Right cardiac atrium (tissue), 5 donors: ENCODE measurements at regions of chr6 and their contacts with region 1.

Region 1: DNA sequence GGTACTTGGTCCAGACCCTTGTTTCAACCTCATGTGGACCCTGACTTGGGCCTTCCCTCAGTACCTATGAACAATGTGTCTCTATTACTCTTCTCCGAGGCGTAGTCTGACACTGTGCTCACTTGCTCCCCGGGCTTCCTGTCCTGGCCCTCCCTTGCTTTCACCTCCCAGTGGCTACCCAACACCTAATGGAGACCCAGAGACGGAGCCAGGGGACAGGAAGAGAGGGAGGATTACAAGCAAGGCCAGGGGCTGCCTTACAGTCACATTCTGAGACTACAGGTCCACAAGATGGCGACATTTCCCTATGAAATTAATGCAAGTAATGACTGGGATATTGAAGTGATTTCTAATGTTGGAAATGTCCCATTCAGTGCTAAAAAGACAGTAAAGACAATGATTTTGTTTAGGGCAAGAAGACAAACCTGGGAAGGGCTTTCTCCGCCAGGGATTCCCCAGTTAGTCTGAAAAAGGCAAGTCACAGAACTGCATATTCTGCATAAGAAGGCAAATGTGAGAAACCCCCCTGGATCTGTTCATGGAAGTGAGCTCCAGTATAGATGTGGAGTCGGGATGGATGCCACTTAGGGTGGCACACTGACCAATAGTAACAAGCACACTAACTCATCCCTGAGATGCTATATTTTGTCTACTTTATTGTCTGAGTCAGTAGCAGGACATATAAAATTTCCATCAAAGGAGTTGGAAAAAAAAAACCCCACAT is 44.0 kb upstream of the ZBTB24 start:
- DNase-seq: no peak
- ATAC-seq: peak; percentile 52 to 69
- H3K4me3 ChIP-seq: no peak overlapping the region
- H3K27ac ChIP-seq: no peak overlapping the region
- H3K4me1 ChIP-seq: no peaks in the 10 kb centered on the region
- H3K27me3 ChIP-seq: no peaks in the 10 kb centered on the region

Region 2: GRCh38 chr6:110039364-110039980 is 512.4 kb after region 1 on chr6:
- intact Hi-C with region 1: loop called in 1 of 4 experiments (anchors 10 kb)
- DNase-seq: peak; percentile 85 to 94 (median 94)
- ATAC-seq: peak; percentile 90 to 95
- H3K4me3 ChIP-seq: peak overlapping the region; percentile 36
- H3K27ac ChIP-seq: no peak overlapping the region
- H3K4me1 ChIP-seq: no peaks in the 10 kb centered on the region
- H3K27me3 ChIP-seq: no peaks in the 10 kb centered on the region

Region 3: DNA sequence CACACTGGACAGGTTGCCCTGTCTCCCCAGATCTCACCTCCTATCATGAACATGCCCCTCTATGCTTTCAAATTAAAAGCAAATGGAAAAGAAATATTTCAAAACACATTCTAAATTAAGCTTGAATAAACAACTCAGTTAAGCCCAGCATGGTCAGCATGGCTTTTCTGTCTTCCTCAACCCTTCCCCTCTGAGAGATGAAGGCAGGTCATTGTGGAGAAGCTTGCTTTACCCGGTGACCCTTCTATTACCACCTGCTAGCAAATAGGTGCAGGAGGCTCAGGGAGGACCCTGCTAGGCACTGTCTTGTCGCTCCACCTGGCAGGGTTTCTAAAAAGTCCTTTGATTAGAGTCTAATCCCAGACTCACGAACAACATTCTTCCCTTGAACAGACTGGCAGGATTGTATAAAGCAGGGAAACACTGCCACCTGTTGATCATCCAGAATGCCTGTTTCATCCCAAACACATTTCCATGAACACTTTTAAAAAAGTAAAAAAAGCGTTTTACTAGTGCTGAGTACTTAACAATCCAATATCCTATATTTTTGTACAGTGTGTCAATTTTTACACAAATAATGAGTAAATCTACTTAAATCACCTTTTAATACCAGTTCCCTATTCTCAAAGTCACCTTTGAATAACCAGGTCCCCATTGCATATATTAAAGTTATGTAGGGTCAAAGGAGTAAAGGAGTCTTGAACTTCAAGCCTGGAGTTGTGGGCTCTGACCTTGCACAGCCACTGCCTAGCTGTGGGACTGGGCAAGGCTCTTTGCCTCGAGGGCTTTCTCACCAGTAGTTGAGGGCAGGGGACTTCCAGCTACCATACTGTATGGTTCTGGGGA is 526.6 kb after region 1 on chr6:
- intact Hi-C with region 1: loop called in 3 of 4 experiments (anchors 10 kb)
- DNase-seq: no peak
- ATAC-seq: peak; percentile 55 to 61
- H3K4me3 ChIP-seq: no peak overlapping the region
- H3K27ac ChIP-seq: no peak overlapping the region
- H3K4me1 ChIP-seq: no peaks in the 10 kb centered on the region
- H3K27me3 ChIP-seq: no peaks in the 10 kb centered on the region